SK-N-SH (cell line): ENCODE measurements at regions of chr1 and their contacts with region 1.

Region 1: DNA sequence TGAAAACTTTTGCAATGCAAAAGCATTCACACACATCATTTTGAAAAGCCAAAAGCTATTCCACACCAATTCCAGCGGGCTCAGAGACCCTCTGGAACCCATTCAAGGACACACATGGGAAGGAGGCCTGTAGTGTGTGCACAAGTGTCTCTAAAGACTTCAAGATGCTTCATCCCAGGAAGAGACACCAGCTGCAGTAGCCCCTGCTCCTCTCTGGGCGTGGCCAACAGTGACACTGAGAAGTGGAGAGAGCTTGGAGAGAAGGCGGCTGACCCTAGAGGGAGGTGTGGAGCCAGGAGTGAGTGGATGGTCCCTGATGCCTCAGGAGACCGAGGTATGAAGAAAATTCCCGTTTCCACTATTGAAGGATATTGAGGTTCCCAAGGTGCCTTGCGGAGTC is 14.9 kb upstream of the TNNI1 start:
- DNase-seq: no peak
- H3K4me3 ChIP-seq: no peak overlapping the region
- H3K27ac ChIP-seq: no peak overlapping the region
- H3K4me1 ChIP-seq: peaks cover 4 to 5% of the 10 kb centered on the region in 2 experiments; a peak in 2 of 4 replicates
- H3K27me3 ChIP-seq: no peaks in the 10 kb centered on the region; the same call in 1 of the 2 replicates
- CTCF ChIP-seq: peak; percentile 13; the same call in 1 of the 2 replicates
- EP300 ChIP-seq: no peak
- RAD21 ChIP-seq: no peak

Region 2: DNA sequence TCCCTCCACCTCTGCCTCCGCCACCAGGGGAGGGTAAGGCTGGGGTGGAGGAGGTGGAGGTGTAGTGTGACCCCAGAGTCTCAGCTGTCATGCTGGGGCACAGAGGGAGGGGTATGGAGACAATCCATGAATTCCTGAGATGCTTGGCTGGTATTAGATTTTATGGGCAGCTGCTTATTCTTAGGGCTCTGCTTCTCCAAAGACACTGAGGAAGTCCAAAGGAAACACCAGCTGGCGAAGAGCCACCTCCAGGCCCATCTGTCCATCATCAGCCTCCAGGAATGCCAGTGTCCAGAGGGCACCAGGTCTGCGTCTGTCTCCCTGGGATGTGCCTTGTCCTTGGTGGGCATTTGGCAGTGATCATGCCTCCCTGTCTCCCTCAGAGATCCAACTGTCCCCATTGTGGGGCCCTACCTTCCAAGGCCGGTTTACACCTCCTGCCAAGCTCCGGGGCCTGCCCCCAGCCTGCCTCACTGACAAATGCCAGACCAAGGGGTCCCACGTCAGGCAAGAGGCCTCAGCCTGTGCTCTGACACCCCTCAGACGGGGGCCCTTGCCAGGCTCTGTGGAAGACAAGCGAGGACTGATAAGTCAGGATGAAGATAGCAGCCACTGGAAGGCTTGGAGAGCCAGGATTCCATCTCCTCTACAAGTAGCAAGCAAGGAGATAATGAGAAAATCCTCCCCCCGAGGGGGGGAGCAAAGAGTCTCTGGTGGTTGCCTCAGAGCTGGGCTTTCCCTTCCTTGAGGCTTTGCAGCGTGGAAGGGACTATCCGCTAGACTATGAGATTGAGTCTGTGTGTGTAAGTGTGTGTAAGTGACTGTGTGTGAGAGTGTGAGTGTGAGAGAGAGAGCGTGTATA is 16.4 kb before region 1 on chr1:
- CTCF ChIA-PET with region 1: interaction called, 15 read pairs
- POLR2A ChIA-PET with region 1: no interaction called
- DNase-seq: no peak
- H3K4me3 ChIP-seq: no peak overlapping the region
- H3K27ac ChIP-seq: no peak overlapping the region
- H3K4me1 ChIP-seq: peaks cover 0 to 7% of the 10 kb centered on the region in 2 experiments; a peak in 1 of 4 replicates
- H3K27me3 ChIP-seq: peaks cover 6% of the 10 kb centered on the region; the same call in 1 of the 2 replicates
- CTCF ChIP-seq: no peak
- EP300 ChIP-seq: no peak
- RAD21 ChIP-seq: no peak

Region 3: DNA sequence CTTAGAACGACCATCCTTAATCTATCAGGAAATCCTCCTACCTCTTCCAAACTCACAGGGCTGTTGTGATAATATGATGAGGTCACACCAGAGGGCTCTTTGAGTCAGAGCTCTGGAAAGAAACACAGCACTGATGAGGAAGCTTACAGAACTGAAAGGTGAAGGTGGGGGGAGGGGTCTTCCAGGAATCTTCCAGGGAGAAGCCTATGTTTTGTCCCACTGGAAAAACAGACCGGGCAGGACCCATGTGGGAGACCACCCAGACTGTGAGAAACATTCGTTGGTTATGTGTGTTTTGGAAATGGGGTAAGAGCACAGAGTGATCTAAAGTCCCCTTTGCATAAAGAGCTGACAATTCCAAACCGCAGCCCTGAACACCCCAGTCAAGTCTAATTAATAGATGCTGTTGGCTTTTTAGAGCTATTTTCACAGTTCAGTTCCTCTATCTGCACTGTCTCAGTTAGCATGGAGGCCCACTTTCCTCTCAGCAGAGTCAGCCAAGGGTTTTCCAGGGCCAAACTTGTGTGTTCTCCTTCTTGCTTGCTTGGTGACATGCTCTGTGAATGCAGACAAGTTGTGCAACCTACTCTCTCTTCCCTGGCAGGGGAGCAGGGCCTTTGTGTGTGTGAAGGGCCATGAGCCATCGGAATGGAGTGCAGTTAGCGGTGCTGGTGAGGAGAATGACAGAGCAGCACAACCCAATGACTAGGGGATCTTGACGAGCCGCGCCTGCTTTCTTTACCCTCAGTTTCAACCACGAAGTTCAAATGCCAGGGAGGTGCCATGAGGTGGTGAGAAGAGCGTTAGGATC is 20.3 kb after region 1 on chr1:
- CTCF ChIA-PET with region 1: interaction called, 78 read pairs
- POLR2A ChIA-PET with region 1: no interaction called
- DNase-seq: no peak
- H3K4me3 ChIP-seq: no peak overlapping the region; a peak in 1 of 4 replicates
- H3K27ac ChIP-seq: peak overlapping the region in 1 of 2 experiments; percentile 88; a peak in 2 of 4 replicates
- H3K4me1 ChIP-seq: peaks cover 11 to 35% of the 10 kb centered on the region in 2 experiments; a peak in 3 of 4 replicates
- H3K27me3 ChIP-seq: no peaks in the 10 kb centered on the region
- CTCF ChIP-seq: no peak
- EP300 ChIP-seq: 0 out of 4 replicates have a peak, but pooled peaks of 1 of the 2 experiments have one; percentile 13
- RAD21 ChIP-seq: no peak

Region 4: GRCh38 chr1:201481761-201482493 is 45.5 kb after region 1 on chr1:
- CTCF ChIA-PET with region 1: interaction called, 22 read pairs
- POLR2A ChIA-PET with region 1: no interaction called
- DNase-seq: peak; percentile 95
- H3K4me3 ChIP-seq: peak overlapping the region in 1 of 2 experiments; percentile 9; a peak in 1 of 4 replicates
- H3K27ac ChIP-seq: 0 out of 4 replicates have a peak overlapping the region, but pooled peaks of 1 of the 2 experiments have one; percentile 13
- H3K4me1 ChIP-seq: peaks cover 0 to 6% of the 10 kb centered on the region in 2 experiments; a peak in 2 of 4 replicates
- H3K27me3 ChIP-seq: no peaks in the 10 kb centered on the region
- CTCF ChIP-seq: peak; percentile 86
- EP300 ChIP-seq: no peak
- RAD21 ChIP-seq: peak; percentile 93